KBM-7 (cell line): ENCODE measurements at regions of chr7 and their contacts with region 1.

Region 1: GRCh38 chr7:20624666-20625385 is 9.4 kb downstream of the ABCB5 start:
- DNase-seq: no peak

Region 2: DNA sequence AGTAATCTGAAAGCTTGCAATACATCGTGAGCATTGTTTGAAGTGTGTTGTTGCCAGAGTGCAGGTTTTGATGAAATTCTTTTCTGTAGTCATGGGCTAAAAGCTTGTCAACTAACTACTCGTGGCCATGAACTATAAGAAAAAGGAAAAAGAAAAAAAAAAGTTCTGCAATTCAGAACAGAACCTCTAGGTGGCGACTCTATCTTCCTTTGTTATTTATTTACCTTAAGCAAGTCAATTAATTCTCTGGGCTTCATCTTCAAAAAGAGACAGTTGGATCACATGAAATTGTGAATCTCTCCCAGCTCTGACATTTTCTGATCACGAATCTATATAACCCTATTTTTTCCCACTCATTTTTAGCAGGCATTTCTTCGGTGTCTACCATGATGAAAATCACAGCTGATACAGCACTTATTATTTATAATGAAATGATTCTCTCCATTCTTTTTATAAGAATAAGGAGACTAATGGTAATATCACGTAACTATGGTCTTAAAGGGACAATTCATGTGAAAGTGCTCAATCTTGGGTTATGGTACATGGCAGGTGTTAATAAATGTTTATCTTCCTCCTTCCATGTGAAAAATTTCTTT is 870.2 kb before region 1 on chr7:
- in situ Hi-C with region 1: loop called (anchors 25 kb)
- DNase-seq: peak; percentile 88

Region 3: DNA sequence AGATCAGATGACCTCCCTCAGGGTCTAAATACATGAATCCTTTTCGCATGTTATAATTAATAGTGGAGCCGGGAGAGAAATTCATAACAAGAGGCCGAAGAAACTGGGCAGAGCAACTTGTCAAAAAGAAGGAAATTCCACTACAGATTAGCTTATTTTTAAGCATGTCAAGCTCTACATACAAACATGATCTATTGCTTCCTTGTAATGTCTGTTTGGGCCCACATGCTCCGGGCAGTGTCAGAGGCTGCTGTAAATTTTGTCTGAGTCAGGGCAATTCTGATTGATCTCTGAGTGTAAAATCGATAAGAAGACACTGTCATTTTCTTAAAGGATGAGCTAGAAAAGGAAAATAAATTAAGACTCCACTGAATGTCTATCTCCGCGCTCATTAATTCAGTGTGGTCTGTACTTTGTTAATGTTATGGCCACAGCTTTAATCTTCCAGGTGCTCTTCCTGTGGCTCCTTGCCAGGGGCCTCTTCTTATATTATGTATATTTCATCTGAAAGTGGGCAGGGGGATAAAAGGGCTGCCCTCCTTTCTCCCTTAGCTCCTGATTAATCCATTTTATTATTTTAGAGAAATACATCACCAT is 355.9 kb after region 1 on chr7:
- in situ Hi-C with region 1: no loop called
- DNase-seq: no peak

Region 4: GRCh38 chr7:21690705-21691104 is 1065.9 kb after region 1 on chr7:
- in situ Hi-C with region 1: no loop called
- DNase-seq: no peak